Posterior vena cava (tissue), 2 donors: ENCODE measurements at regions of chr12 and their contacts with region 1.

Region 1: DNA sequence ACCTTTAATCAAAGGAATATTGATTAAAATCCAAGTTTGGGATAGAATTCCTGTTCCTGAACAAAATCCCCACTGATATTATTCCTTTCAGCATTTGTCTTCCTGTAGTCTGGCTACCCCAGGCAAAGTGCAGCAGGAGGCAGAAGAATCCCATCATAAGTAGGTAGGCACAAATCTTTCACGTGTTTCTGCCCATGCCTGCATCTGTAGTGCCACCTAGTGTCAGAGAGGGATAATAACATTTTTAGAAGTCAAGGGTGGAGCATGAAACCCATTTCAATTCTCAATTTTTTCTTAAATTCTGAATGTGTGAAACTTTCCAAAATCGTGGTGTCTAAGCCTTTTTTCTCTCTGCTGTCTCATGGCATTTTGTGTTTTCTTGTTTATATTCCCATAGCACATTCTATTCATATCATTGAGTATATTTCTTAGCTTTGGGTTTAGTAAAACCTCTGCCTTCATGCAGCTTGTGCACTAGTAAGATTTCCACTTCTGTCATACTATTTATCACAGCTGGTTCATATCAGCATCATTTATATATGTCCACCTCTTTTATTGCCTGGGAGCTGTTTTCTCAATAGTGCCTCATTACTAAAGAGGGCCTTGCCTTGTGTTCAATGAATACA is 47.8 kb upstream of the RERG start:
- DNase-seq: no peak

Region 2: DNA sequence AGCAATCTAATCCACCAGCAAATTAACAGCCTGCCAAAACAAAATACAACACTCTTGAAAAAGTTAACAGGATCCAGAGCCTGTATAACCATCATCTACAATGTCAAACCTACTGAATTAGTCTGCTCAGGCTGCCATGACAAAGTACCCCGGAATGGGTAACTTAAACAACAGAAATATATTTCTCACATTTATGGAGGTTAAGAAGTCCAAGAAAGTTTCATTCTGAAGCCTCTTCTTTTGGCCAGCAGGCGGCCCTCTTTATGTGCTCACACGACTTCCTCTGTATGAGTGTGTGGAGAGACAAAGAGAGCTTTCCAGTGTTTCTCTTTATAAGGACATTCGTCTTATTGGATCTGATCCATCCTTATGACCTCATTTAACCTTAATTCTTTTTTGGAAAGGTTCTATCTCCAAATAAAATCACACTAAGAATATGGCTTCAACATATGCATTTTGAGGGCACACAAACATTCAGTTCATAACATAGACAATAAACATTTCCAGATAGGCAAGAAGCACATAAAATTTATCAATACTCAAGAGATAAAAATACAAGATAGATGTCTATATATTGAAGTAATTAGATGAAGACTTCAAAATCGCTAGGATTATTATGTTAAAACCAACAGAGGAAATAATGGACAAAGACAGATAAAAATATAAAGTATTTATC is 41.9 kb before region 1 on chr12:
- intact Hi-C with region 1: loop called (anchors 5 kb)
- DNase-seq: peak; percentile 85

Region 3: DNA sequence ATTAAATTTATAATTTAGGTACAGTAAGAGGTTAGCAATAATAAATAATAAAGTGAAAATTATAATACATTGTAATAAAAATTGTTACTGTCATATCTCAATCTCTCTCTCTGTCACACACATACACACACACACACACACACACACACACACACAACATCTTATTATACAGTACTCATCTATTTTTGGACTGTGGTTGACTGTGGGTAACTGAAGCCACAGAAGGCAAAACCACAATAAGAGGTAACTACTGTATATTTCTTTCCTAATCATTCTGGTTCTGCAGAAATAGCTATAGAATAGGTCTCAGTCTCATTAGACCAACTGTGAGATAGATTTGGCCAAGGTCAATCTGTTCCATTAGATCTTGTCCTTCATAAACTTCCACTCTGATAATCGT is 20.2 kb after region 1 on chr12:
- intact Hi-C with region 1: no loop called
- DNase-seq: no peak